B cell (primary cell): ENCODE measurements at regions of chr5 and their contacts with region 1.

Region 1: GRCh38 chr5:61331407-61332357 is at the start of gene ZSWIM6:
- DNase-seq: peak; percentile 100
- ATAC-seq: peak; percentile 76
- H3K4me3 ChIP-seq: peak within 1 kb of the TSS; percentile 43 to 98 (median 86)
- H3K4me3 Mint-ChIP-seq: peak within 1 kb of the TSS; percentile 94
- H3K27ac ChIP-seq: peak within 1 kb of the TSS; percentile 85 to 89
- H3K27ac Mint-ChIP-seq: peak within 1 kb of the TSS; percentile 98
- H3K4me1 ChIP-seq: peaks cover 32 to 38% of the 10 kb centered on the region in 2 donors
- H3K4me1 Mint-ChIP-seq: peaks cover 48% of the 10 kb centered on the region
- H3K27me3 ChIP-seq: peaks cover 0 to 6% (median 2%) of the 10 kb centered on the region in 4 experiments
- H3K27me3 Mint-ChIP-seq: peaks cover 10% of the 10 kb centered on the region
- CTCF ChIP-seq: no peak
- total RNA-seq, gene ZSWIM6: 15.9 and 16.4 TPM in 2 replicates

Region 2: GRCh38 chr5:60677844-60678664 is 653.6 kb before region 1 on chr5:
- CTCF ChIA-PET with region 1: no interaction called
- POLR2A ChIA-PET with region 1: no interaction called
- intact Hi-C with region 1: no loop called
- DNase-seq: peak; percentile 54
- ATAC-seq: no peak
- H3K4me3 ChIP-seq: no peak overlapping the region
- H3K4me3 Mint-ChIP-seq: no peak overlapping the region
- H3K27ac ChIP-seq: no peak overlapping the region
- H3K27ac Mint-ChIP-seq: no peak overlapping the region
- H3K4me1 ChIP-seq: no peaks in the 10 kb centered on the region
- H3K4me1 Mint-ChIP-seq: peaks cover 2% of the 10 kb centered on the region
- H3K27me3 ChIP-seq: no peaks in the 10 kb centered on the region
- H3K27me3 Mint-ChIP-seq: no peaks in the 10 kb centered on the region
- CTCF ChIP-seq: peak; percentile 73

Region 3: DNA sequence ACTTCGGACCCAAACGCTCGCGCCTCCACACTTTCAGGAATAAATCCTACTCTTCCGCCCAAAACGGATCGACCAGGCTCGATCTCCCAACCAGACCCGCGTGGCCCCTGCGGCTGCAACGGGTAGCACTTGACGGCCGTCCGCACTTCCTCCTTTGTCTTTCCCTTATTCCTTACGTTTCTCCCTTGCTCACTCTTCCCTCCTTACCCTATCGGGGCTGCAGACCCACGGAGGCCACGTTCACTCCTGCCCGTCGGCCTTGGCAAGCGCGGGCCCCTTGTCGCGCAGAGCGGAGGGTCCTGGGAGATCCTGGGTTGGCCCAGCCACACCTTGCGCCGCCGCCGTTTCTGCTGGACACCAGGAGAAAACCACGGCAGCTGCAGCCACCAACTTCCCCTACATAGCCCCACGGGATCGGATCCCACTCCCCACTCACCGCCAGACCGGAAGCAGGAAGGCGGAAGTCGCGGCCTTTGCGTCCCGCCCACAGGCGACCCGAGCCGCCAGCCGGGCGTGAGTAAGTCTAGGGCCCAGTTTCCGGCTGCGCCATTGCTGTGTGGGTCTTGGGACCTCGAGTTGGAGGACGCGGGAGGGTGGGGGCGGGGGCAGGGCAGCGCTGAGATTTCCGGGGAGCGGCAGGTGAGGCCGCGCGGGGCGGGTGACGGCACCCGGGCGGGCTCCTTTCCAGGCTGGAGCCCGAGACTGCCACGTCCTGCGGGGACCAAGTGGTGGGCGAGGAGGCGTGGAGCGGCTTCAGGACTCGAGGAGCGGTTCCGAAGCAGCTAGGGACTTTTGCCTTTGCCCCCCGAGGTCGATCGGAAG is 169.5 kb before region 1 on chr5 and contains the start of gene SMIM15:
- CTCF ChIA-PET with region 1: interaction called, 4 read pairs
- POLR2A ChIA-PET with region 1: no interaction called
- intact Hi-C with region 1: loop called (anchors 2 kb)
- DNase-seq: peak; percentile 87
- ATAC-seq: peak; percentile 90
- H3K4me3 ChIP-seq: peak within 1 kb of the TSS; percentile 86 to 96 (median 92)
- H3K4me3 Mint-ChIP-seq: peak within 1 kb of the TSS; percentile 97
- H3K27ac ChIP-seq: peak within 1 kb of the TSS; percentile 86 to 88
- H3K27ac Mint-ChIP-seq: peak within 1 kb of the TSS; percentile 97
- H3K4me1 ChIP-seq: peaks cover 18 to 20% of the 10 kb centered on the region in 2 donors
- H3K4me1 Mint-ChIP-seq: peaks cover 38% of the 10 kb centered on the region
- H3K27me3 ChIP-seq: no peaks in the 10 kb centered on the region
- H3K27me3 Mint-ChIP-seq: no peaks in the 10 kb centered on the region
- CTCF ChIP-seq: no peak
- total RNA-seq, gene SMIM15: 28.7 and 29.8 TPM in 2 replicates

Region 4: GRCh38 chr5:61277190-61277589 is 54.5 kb before region 1 on chr5:
- CTCF ChIA-PET with region 1: no interaction called
- POLR2A ChIA-PET with region 1: no interaction called
- intact Hi-C with region 1: loop called (anchors 5 kb)
- DNase-seq: peak; percentile 17
- ATAC-seq: no peak
- H3K4me3 ChIP-seq: peak overlapping the region in 1 of 5 experiments; percentile 33
- H3K4me3 Mint-ChIP-seq: no peak overlapping the region
- H3K27ac ChIP-seq: peak overlapping the region in 1 of 2 donors; percentile 5
- H3K27ac Mint-ChIP-seq: no peak overlapping the region
- H3K4me1 ChIP-seq: peaks cover 34 to 40% of the 10 kb centered on the region in 2 donors
- H3K4me1 Mint-ChIP-seq: peaks cover 35% of the 10 kb centered on the region
- H3K27me3 ChIP-seq: no peaks in the 10 kb centered on the region
- H3K27me3 Mint-ChIP-seq: peaks cover 4% of the 10 kb centered on the region
- CTCF ChIP-seq: no peak

Region 5: DNA sequence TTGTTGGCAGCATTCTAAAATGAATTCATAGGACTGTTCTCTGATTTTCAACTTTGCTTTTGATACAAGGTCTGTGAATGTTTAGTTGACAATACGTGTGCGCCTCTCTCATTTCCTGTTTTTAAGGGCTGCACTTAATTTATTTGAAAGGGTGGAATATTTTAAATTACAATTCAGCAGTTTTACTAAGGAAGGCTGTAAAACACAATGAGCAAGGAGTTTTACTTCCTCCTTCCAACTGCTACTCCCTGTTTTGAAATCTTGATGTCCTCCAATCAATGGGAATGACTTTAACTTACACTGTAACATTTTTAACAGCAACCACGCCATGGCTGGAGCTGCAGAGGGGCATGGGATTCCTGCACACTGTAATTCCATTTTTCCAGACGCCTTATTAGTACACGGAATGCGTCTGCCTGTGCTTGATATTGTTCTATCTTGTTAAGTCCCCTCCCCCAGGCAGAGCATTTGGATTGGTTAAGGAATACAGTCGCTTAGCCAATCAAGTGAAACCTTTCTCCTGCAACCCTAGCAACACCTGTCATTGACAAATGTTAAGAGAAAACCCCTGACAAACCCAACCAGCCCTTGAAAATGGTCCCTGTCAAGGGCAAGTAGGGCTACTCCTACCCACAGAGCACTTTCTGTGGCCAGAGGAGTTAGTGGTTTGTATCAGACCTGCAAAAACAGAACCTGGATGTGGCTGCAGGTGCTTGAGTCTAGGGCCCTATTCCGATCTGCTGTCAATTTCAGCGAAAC is 12.1 kb before region 1 on chr5:
- CTCF ChIA-PET with region 1: interaction called, 6 read pairs
- POLR2A ChIA-PET with region 1: interaction called, 5 read pairs
- intact Hi-C with region 1: loop called (anchors 1 kb)
- DNase-seq: peak; percentile 74
- ATAC-seq: peak; percentile 86
- H3K4me3 ChIP-seq: peak overlapping the region in 4 of 5 experiments; percentile 19 to 48 (median 36)
- H3K4me3 Mint-ChIP-seq: peak overlapping the region; percentile 78
- H3K27ac ChIP-seq: peak overlapping the region in 1 of 2 donors; percentile 0
- H3K27ac Mint-ChIP-seq: no peak overlapping the region
- H3K4me1 ChIP-seq: peaks cover 16 to 24% of the 10 kb centered on the region in 2 donors
- H3K4me1 Mint-ChIP-seq: peaks cover 23% of the 10 kb centered on the region
- H3K27me3 ChIP-seq: no peaks in the 10 kb centered on the region
- H3K27me3 Mint-ChIP-seq: peaks cover 17% of the 10 kb centered on the region
- CTCF ChIP-seq: no peak

Region 6: GRCh38 chr5:61408476-61409168 is 76.9 kb after region 1 on chr5:
- CTCF ChIA-PET with region 1: interaction called, 18 read pairs
- POLR2A ChIA-PET with region 1: interaction called, 29 read pairs
- intact Hi-C with region 1: loop called (anchors 1 kb)
- DNase-seq: peak; percentile 98
- ATAC-seq: peak; percentile 98
- H3K4me3 ChIP-seq: peak overlapping the region; percentile 34 to 58 (median 42)
- H3K4me3 Mint-ChIP-seq: peak overlapping the region; percentile 90
- H3K27ac ChIP-seq: peak overlapping the region in 1 of 2 donors; percentile 51
- H3K27ac Mint-ChIP-seq: peak overlapping the region; percentile 95
- H3K4me1 ChIP-seq: peaks cover 16 to 17% of the 10 kb centered on the region in 2 donors
- H3K4me1 Mint-ChIP-seq: peaks cover 35% of the 10 kb centered on the region
- H3K27me3 ChIP-seq: no peaks in the 10 kb centered on the region
- H3K27me3 Mint-ChIP-seq: no peaks in the 10 kb centered on the region
- CTCF ChIP-seq: no peak

Region 7: DNA sequence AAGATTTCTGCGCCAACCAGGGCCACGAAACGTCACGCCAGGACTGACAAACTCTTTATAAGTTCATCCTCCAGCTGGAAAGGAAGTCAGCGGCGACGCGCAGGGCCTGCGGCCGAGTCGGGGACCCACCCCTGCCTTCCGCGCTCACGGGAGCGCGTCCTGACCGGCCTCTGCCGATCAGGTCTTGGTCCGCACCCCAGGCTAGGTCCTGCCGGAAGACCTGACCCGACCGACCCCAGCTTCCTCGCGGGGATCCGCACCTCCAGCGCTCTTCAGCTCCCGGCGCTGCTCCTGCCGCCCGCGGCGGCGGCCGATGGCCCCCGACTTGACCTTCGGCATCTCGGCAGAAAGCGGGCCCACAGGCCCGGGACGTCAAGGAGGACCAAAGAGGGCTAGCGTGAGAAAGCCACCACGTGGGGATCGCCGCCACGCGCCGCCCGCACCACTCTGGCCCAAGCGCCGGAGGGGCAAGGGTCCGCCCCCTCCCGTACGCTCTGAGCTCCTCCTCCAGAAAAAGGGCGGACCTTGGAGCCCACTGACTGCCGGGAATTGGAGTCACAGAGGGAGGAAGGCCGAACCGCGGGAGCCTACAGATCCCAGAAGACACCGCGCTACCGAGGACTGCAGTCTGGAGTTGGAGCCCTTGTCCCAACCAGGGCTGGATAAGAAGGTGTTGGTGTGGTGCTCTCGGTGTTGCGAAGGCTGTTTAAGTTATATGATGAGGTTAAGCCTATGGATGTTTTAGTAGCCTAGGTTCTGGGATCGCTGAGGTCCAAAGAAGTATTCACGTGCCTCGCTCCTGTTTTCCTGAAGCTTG is 1072.0 kb after region 1 on chr5 and contains the start of gene DIMT1:
- CTCF ChIA-PET with region 1: no interaction called
- POLR2A ChIA-PET with region 1: no interaction called
- intact Hi-C with region 1: loop called (anchors 2 kb)
- DNase-seq: peak; percentile 93
- ATAC-seq: peak; percentile 99
- H3K4me3 ChIP-seq: peak within 1 kb of the TSS; percentile 92 to 98 (median 97)
- H3K4me3 Mint-ChIP-seq: peak within 1 kb of the TSS; percentile 100
- H3K27ac ChIP-seq: peak within 1 kb of the TSS; percentile 93 to 95
- H3K27ac Mint-ChIP-seq: peak within 1 kb of the TSS; percentile 87
- H3K4me1 ChIP-seq: peaks cover 5 to 16% of the 10 kb centered on the region in 2 donors
- H3K4me1 Mint-ChIP-seq: peaks cover 22% of the 10 kb centered on the region
- H3K27me3 ChIP-seq: no peaks in the 10 kb centered on the region
- H3K27me3 Mint-ChIP-seq: no peaks in the 10 kb centered on the region
- CTCF ChIP-seq: no peak
- total RNA-seq, gene DIMT1: 19.5 and 20.7 TPM in 2 replicates